HEK293 (cell line): ENCODE measurements at regions of chr5 and their contacts with region 1.

Region 1: GRCh38 chr5:141557681-141558136 is 61.1 kb downstream of the DIAPH1 start:
- H3K4me3 ChIP-seq: no peak overlapping the region
- H3K27ac ChIP-seq: no peak overlapping the region
- H3K4me1 ChIP-seq: no peaks in the 10 kb centered on the region
- CTCF ChIP-seq: peak; percentile 49

Region 2: GRCh38 chr5:141245250-141245717 is 312.4 kb before region 1 on chr5 and contains the start of gene PCDHB15:
- CTCF ChIA-PET with region 1: interaction called, 18 read pairs
- POLR2A ChIA-PET with region 1: no interaction called
- H3K4me3 ChIP-seq: peak within 1 kb of the TSS; percentile 15
- H3K27ac ChIP-seq: no peak within 1 kb of the TSS
- H3K4me1 ChIP-seq: no peaks in the 10 kb centered on the region
- CTCF ChIP-seq: no peak

Region 3: DNA sequence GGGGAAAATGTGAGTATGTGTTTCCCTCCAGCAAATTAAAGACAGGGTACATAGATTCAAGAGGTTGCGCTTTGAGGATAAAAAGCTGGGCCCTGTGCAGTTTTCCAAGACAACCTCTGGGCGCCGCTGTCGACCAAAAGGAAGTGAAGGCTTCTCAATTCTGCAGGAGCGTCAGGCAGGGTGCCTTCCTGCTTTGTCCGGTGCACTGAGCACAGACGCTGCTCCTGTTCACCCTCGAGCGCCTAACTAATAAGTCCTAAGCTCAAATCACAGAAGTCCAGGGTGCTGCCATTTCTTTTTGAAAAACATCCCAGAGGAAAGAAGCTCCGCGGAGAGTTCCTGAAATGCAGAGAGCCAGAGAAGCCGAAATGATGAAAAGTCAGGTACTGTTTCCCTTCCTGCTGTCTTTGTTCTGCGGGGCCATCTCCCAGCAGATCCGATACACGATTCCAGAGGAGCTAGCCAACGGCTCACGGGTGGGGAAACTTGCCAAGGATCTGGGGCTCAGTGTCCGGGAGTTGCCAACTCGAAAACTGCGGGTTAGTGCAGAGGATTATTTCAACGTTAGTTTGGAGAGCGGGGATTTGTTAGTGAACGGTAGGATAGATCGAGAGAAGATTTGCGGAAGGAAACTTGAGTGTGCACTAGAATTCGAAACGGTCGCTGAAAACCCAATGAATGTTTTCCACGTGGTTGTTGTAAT is 207.6 kb before region 1 on chr5 and contains the start of gene PCDHGB1:
- CTCF ChIA-PET with region 1: interaction called, 27 read pairs
- POLR2A ChIA-PET with region 1: no interaction called
- H3K4me3 ChIP-seq: peak within 1 kb of the TSS; percentile 34
- H3K27ac ChIP-seq: no peak within 1 kb of the TSS
- H3K4me1 ChIP-seq: peaks cover 2% of the 10 kb centered on the region; the same call in 1 of the 2 replicates
- CTCF ChIP-seq: peak; percentile 47; the same call in 1 of the 2 replicates

Region 4: GRCh38 chr5:141402553-141403260 is 155.0 kb before region 1 on chr5 and contains the start of gene PCDHGA9:
- CTCF ChIA-PET with region 1: interaction called, 57 read pairs
- POLR2A ChIA-PET with region 1: interaction called, 3 read pairs
- H3K4me3 ChIP-seq: no peak within 1 kb of the TSS
- H3K27ac ChIP-seq: no peak within 1 kb of the TSS
- H3K4me1 ChIP-seq: no peaks in the 10 kb centered on the region
- CTCF ChIP-seq: no peak

Region 5: DNA sequence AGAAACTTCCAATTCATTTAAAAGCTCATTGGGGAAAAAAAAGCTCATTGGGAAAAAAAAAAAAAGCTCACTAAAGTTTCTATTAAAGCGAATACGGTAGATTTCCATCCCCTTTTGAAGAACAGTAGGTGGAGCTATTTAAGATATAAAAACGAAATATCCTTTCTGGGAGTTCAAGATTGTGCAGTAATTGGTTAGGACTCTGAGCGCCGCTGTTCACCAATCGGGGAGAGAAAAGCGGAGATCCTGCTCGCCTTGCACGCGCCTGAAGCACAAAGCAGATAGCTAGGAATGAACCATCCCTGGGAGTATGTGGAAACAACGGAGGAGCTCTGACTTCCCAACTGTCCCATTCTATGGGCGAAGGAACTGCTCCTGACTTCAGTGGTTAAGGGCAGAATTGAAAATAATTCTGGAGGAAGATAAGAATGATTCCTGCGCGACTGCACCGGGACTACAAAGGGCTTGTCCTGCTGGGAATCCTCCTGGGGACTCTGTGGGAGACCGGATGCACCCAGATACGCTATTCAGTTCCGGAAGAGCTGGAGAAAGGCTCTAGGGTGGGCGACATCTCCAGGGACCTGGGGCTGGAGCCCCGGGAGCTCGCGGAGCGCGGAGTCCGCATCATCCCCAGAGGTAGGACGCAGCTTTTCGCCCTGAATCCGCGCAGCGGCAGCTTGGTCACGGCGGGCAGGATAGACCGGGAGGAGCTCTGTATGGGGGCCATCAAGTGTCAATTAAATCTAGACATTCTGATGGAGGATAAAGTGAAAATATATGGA is 127.2 kb before region 1 on chr5 and contains the start of gene PCDHGA12:
- CTCF ChIA-PET with region 1: interaction called, 34 read pairs
- POLR2A ChIA-PET with region 1: no interaction called
- H3K4me3 ChIP-seq: no peak within 1 kb of the TSS
- H3K27ac ChIP-seq: no peak within 1 kb of the TSS
- H3K4me1 ChIP-seq: no peaks in the 10 kb centered on the region
- CTCF ChIP-seq: no peak

Region 6: DNA sequence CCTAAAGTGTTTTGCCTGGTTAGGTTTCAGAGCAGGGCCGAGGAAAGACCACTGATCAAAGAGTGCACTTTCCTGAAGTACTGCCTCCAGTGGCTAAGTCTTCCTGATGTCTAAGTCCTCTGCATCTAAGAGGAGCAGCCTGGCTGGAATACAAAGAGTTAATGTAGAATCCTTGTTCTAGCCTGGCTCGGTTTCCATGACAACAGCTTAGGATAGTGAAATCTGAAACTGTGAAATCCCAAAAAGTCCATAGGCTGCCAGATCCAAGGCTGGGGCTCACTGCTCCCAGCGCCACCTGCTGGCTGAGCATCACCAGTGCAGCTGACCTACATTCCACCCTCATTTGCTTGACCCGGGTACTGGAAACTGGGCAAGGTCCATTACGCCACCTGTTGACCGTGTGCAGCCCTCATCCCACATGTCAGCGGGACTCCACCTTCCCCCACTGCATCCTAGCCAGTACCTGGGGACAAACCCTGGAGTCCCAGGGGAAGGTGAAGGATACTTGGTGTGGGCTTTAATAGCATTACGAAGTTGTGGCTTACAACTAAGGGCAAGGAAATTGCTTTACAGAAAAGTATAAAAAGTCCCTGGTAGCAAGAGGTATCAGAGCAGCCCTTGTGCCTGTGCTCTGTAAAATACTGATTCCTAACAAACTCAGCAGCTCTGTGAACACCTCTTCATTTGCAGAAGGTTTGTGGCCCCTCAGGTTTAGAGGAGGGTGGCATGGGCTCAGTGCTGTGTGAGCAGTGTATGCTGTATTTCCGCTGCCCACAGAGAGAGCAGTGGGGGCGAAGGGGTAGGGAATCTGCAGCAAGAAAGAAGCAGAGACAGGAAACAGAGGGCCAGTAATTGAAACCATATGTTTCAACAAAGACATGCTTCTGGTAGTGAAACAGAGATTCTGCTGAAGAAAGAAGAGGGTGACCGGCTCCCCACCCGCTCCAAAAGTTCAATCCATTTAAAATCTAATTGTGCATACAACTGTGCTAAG is 32.8 kb before region 1 on chr5:
- CTCF ChIA-PET with region 1: interaction called, 40 read pairs
- POLR2A ChIA-PET with region 1: no interaction called
- H3K4me3 ChIP-seq: no peak overlapping the region
- H3K27ac ChIP-seq: no peak overlapping the region
- H3K4me1 ChIP-seq: peaks cover 11% of the 10 kb centered on the region
- CTCF ChIP-seq: peak; percentile 98